WTC11 (cell line): ENCODE measurements at regions of chr5 and their contacts with region 1.

Region 1: GRCh38 chr5:168987543-168988300 is 313.2 kb downstream of the SLIT3 start:
- DNase-seq: peak; percentile 88
- ATAC-seq: peak; percentile 68
- H3K4me3 Mint-ChIP-seq: no peak overlapping the region
- H3K27ac Mint-ChIP-seq: no peak overlapping the region
- H3K4me1 Mint-ChIP-seq: peaks cover 81% of the 10 kb centered on the region
- H3K27me3 Mint-ChIP-seq: no peaks in the 10 kb centered on the region
- CTCF ChIP-seq: peak; percentile 84

Region 2: DNA sequence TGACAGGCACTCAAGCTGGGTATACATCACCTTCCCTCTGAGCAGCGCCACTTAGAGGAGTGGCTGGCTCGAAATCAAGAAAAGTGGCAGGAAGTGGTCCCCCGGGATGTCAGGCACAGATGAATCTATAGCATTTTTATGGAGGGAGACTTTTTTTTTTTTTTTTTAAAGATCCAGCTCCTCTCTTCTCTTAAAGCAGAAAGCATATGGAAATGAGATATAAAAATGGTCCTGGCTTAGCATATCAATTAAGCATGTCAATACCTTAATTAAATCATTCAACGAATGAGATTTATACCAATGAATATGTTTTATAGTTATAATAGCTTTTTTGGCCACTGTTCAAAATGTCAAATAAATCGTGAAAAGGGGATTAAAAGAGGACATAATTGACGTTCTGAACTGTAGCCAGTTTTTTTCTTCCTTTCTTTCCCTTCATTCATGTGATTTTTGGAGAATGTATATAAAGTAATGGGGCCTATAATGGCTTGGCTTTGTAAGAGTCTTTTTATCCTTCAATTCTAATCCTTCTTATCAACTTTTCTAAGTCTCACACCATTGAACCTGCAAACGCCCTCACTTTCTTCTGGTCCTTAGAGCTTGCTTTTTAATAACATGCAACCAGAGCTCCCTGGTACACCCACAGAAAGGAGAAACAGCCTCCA is 89.3 kb before region 1 on chr5:
- CTCF ChIA-PET with region 1: no interaction called
- POLR2A ChIA-PET with region 1: no interaction called
- DNase-seq: no peak
- ATAC-seq: no peak
- H3K4me3 Mint-ChIP-seq: no peak overlapping the region
- H3K27ac Mint-ChIP-seq: no peak overlapping the region
- H3K4me1 Mint-ChIP-seq: peaks cover 6% of the 10 kb centered on the region; the same call in 1 of the 2 replicates
- H3K27me3 Mint-ChIP-seq: no peaks in the 10 kb centered on the region; the same call in 1 of the 2 replicates
- CTCF ChIP-seq: no peak

Region 3: DNA sequence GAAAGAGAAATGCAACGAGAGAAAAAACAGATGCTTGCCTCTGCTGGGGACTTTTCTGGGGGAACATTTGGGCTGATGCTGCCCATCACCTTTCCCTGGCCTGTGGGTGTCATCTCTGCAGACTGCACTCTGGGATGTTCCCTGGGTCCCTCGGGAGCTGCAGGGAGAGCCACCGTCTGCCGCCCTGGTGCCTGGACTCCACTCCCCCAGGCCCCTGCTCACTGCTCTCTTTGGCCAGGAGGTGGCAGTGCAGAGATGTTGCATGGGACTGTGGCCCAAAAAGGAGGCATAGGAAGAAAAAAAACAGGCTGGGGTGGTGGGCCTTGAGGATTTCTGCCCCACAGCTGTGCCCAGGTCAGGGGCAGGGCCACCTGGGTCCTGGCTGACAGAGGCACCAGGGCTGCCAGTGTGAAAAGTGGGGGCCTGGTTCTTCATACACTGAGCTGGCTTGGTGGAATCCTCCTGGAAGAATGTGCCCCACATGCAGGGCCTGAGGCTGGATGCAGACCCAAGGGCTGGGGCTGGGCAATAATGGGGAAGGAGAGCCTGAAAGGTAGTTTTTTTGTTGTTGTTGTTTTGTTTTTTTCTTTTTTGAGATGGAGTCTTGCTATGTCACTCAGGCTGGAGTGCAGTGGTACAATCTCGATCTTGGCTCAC is 40.4 kb before region 1 on chr5:
- CTCF ChIA-PET with region 1: interaction called, 16 read pairs
- POLR2A ChIA-PET with region 1: no interaction called
- DNase-seq: peak; percentile 84
- ATAC-seq: peak; percentile 89
- H3K4me3 Mint-ChIP-seq: no peak overlapping the region
- H3K27ac Mint-ChIP-seq: no peak overlapping the region
- H3K4me1 Mint-ChIP-seq: peaks cover 14% of the 10 kb centered on the region
- H3K27me3 Mint-ChIP-seq: no peaks in the 10 kb centered on the region
- CTCF ChIP-seq: peak; percentile 73

Region 4: GRCh38 chr5:169029661-169030274 is 42.0 kb after region 1 on chr5:
- CTCF ChIA-PET with region 1: no interaction called
- POLR2A ChIA-PET with region 1: no interaction called
- DNase-seq: no peak
- ATAC-seq: peak; percentile 28; the same call in 1 of the 2 replicates
- H3K4me3 Mint-ChIP-seq: no peak overlapping the region
- H3K27ac Mint-ChIP-seq: no peak overlapping the region
- H3K4me1 Mint-ChIP-seq: peaks cover 25% of the 10 kb centered on the region
- H3K27me3 Mint-ChIP-seq: no peaks in the 10 kb centered on the region
- CTCF ChIP-seq: no peak

Region 5: DNA sequence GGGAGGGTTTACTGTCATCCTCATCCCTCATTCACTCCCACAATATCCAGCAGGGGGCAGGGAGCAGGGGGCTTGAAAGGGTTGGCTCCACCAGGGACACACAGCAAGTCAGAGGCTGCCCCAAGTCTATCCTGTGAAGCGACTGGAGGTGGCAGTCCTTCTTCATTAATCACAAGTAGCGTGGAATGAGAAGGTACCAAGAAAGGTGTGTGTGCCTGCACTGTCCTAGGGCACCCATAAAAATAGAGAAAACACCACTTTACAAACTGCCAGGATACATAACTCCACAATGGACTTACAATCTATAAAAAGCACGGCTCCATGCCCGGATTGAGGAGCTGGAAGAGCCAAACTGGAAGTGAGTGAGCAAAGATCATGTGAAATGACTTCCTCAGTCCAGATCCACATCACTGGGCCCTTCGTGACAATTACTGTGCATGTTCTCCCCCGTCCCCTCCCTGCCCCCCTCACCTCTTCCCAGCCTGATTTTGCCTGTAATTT is 129.3 kb after region 1 on chr5:
- CTCF ChIA-PET with region 1: interaction called, 10 read pairs
- POLR2A ChIA-PET with region 1: no interaction called
- DNase-seq: peak; percentile 70
- ATAC-seq: peak; percentile 98
- H3K4me3 Mint-ChIP-seq: no peak overlapping the region
- H3K27ac Mint-ChIP-seq: no peak overlapping the region
- H3K4me1 Mint-ChIP-seq: peaks cover 35% of the 10 kb centered on the region
- H3K27me3 Mint-ChIP-seq: no peaks in the 10 kb centered on the region
- CTCF ChIP-seq: no peak

Region 6: GRCh38 chr5:169161022-169161680 is 173.4 kb after region 1 on chr5:
- CTCF ChIA-PET with region 1: interaction called, 10 read pairs
- POLR2A ChIA-PET with region 1: no interaction called
- DNase-seq: peak; percentile 18
- ATAC-seq: peak; percentile 54
- H3K4me3 Mint-ChIP-seq: no peak overlapping the region
- H3K27ac Mint-ChIP-seq: no peak overlapping the region; the same call in 1 of the 2 replicates
- H3K4me1 Mint-ChIP-seq: peaks cover 16% of the 10 kb centered on the region
- H3K27me3 Mint-ChIP-seq: peaks cover 2% of the 10 kb centered on the region; the same call in 1 of the 2 replicates
- CTCF ChIP-seq: no peak

Region 7: GRCh38 chr5:169302491-169303118 is 314.9 kb after region 1 on chr5:
- CTCF ChIA-PET with region 1: interaction called, 28 read pairs
- POLR2A ChIA-PET with region 1: no interaction called
- DNase-seq: peak; percentile 81
- ATAC-seq: peak; percentile 34
- H3K4me3 Mint-ChIP-seq: peak overlapping the region; percentile 83
- H3K27ac Mint-ChIP-seq: no peak overlapping the region
- H3K4me1 Mint-ChIP-seq: peaks cover 21% of the 10 kb centered on the region
- H3K27me3 Mint-ChIP-seq: peaks cover 47% of the 10 kb centered on the region
- CTCF ChIP-seq: peak; percentile 79